Caco-2 (cell line): ENCODE measurements at regions of chr4 and their contacts with region 1.

Region 1: GRCh38 chr4:1856042-1856788 is at the start of gene LETM1:
- DNase-seq: peak; percentile 95 to 98
- H3K4me3 ChIP-seq: peak within 1 kb of the TSS; percentile 95
- H3K4me3 Mint-ChIP-seq: peak within 1 kb of the TSS; percentile 71
- H3K27ac Mint-ChIP-seq: peak within 1 kb of the TSS; percentile 64
- H3K4me1 ChIP-seq: peaks cover 14% of the 10 kb centered on the region
- H3K4me1 Mint-ChIP-seq: peaks cover 7% of the 10 kb centered on the region
- H3K27me3 ChIP-seq: no peaks in the 10 kb centered on the region
- H3K27me3 Mint-ChIP-seq: no peaks in the 10 kb centered on the region
- CTCF ChIP-seq: no peak
- total RNA-seq, gene LETM1: 63.9 and 68.9 TPM in 2 replicates

Region 2: DNA sequence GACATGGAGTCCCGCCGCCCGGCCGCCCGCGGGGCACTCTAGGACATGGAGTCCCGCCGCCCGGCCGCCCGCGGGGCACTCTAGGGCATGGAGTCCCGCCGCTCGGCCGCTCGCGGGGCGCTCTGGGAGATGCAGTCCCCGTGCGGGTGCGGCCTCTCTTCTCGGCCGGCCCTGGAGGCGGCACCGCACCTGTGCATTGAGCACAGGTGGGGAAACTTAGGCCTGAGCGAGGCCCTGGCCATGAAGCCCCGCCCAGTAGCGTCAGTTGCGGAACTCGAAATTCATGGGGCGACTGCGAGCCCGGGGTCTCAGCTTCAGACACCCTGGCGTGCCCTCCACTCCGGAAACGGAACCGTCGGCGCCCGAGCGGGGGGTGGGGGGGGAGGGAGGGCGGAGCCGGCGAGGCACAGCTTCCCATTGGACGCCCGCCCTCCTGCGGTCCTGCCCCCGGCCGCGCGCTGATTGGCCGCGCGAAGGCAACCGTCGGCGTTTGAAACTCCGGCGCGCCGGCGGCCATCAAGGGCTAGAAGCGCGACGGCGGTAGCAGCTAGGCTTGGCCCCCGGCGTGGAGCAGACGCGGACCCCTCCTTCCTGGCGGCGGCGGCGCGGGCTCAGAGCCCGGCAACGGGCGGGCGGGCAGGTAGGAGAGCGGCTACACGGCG is 135.1 kb before region 1 on chr4 and contains the starts of genes TACC3 and TMEM129:
- CTCF ChIA-PET with region 1: no interaction called
- POLR2A ChIA-PET with region 1: no interaction called
- intact Hi-C with region 1: loop called (anchors 1 kb)
- DNase-seq: peak; percentile 98
- H3K4me3 ChIP-seq: peak within 1 kb of the TSS; percentile 95
- H3K4me3 Mint-ChIP-seq: peak within 1 kb of the TSS; percentile 99
- H3K27ac Mint-ChIP-seq: peak within 1 kb of the TSS; percentile 94
- H3K4me1 ChIP-seq: peaks cover 6% of the 10 kb centered on the region; the same call in 1 of the 2 replicates
- H3K4me1 Mint-ChIP-seq: peaks cover 11% of the 10 kb centered on the region
- H3K27me3 ChIP-seq: no peaks in the 10 kb centered on the region
- H3K27me3 Mint-ChIP-seq: no peaks in the 10 kb centered on the region
- CTCF ChIP-seq: no peak
- total RNA-seq, gene TACC3: 104 and 106 TPM in 2 replicates
- total RNA-seq, gene TMEM129: 36.5 and 39.0 TPM in 2 replicates

Region 3: DNA sequence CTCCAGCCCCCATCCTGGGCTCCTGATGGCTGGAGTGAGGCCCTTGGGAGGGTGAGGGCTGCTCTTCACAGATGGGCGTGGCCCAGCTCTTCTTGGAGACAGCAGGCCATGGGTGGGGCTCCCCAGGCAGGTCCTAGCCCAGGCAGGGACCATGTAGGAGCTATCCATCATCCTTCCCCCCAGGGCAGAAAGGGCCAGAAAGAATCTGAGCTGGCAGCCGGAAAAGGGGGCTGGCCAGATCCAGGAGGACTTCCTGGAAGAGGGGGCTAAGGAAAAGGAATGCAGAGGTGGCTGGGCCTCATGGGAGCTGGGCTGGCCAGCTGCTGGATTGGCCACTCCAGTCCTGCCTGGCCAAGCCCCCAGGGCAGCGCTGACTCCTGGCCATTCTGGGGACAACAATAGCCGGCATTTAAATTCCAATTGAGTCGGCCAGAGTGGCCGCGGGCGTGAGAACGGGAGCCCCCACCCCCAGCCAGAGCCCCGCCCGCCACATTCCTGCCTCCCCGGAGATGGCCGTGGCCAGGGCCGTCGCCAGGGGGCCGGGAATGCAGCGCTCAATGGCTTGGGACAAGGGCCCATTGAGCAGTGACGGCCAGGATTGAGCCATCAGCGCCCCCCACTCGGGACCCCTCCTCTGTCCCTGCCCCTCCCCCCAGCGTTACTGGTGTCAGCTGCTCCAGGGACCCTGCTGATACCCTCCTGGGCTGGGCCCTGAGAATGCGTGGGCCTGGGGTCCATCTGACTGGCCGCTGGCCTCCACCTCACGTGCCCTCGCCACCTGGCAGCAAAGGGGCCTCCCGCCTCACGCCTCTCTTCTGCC is 78.2 kb before region 1 on chr4:
- CTCF ChIA-PET with region 1: no interaction called
- POLR2A ChIA-PET with region 1: no interaction called
- intact Hi-C with region 1: no loop called
- DNase-seq: peak; percentile 60 to 86
- H3K4me3 ChIP-seq: no peak overlapping the region
- H3K4me3 Mint-ChIP-seq: no peak overlapping the region
- H3K27ac Mint-ChIP-seq: no peak overlapping the region
- H3K4me1 ChIP-seq: peaks cover 28% of the 10 kb centered on the region
- H3K4me1 Mint-ChIP-seq: no peaks in the 10 kb centered on the region
- H3K27me3 ChIP-seq: no peaks in the 10 kb centered on the region
- H3K27me3 Mint-ChIP-seq: no peaks in the 10 kb centered on the region
- CTCF ChIP-seq: peak in 1 of 2 experiments; percentile 19

Region 4: DNA sequence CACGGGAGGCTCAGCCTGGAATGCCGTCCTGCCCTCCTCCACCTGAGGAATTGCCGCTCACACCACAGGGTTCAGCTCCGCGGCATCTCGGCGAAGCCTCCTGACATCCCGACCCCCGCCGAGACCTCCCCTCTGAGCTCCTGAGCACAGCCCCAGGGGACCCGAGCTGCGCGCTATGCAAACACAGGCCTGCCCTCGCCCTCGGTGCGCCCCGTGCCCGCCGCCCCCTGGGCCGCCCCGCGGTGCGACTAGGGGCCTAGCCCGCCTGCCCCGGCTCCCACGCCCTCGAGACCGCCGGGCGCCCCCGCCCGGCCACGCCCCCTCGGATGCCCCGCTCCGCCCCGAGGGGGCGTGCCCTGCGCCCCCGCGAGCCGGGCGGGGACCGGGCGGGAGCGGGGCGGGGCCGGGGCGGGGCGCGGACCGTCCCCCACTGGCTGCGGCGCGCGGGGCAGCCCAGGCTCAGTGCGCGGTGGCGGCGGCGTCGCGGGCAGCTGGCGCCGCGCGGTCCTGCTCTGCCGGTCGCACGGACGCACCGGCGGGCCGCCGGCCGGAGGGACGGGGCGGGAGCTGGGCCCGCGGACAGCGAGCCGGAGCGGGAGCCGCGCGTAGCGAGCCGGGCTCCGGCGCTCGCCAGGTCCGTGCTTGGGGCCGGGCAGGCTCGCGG is 63.3 kb before region 1 on chr4 and contains the start of gene FGFR3:
- CTCF ChIA-PET with region 1: no interaction called
- POLR2A ChIA-PET with region 1: no interaction called
- intact Hi-C with region 1: loop called (anchors 2 kb)
- DNase-seq: peak; percentile 80 to 83
- H3K4me3 ChIP-seq: peak within 1 kb of the TSS; percentile 73
- H3K4me3 Mint-ChIP-seq: peak within 1 kb of the TSS; percentile 68
- H3K27ac Mint-ChIP-seq: no peak within 1 kb of the TSS
- H3K4me1 ChIP-seq: peaks cover 34% of the 10 kb centered on the region
- H3K4me1 Mint-ChIP-seq: peaks cover 6% of the 10 kb centered on the region
- H3K27me3 ChIP-seq: no peaks in the 10 kb centered on the region
- H3K27me3 Mint-ChIP-seq: no peaks in the 10 kb centered on the region
- CTCF ChIP-seq: no peak
- total RNA-seq, gene FGFR3: 112 and 132 TPM in 2 replicates

Region 5: GRCh38 chr4:1870578-1871443 is 14.6 kb after region 1 on chr4 and contains the start of gene NSD2:
- CTCF ChIA-PET with region 1: interaction called, 6 read pairs
- POLR2A ChIA-PET with region 1: interaction called, 16 read pairs
- intact Hi-C with region 1: loop called (anchors 1 kb)
- DNase-seq: peak; percentile 87 to 95
- H3K4me3 ChIP-seq: peak within 1 kb of the TSS; percentile 69
- H3K4me3 Mint-ChIP-seq: peak within 1 kb of the TSS; percentile 93
- H3K27ac Mint-ChIP-seq: peak within 1 kb of the TSS; percentile 89
- H3K4me1 ChIP-seq: peaks cover 55% of the 10 kb centered on the region
- H3K4me1 Mint-ChIP-seq: peaks cover 21% of the 10 kb centered on the region
- H3K27me3 ChIP-seq: no peaks in the 10 kb centered on the region
- H3K27me3 Mint-ChIP-seq: no peaks in the 10 kb centered on the region
- CTCF ChIP-seq: no peak
- total RNA-seq, gene NSD2: 113 and 122 TPM in 2 replicates

Region 6: DNA sequence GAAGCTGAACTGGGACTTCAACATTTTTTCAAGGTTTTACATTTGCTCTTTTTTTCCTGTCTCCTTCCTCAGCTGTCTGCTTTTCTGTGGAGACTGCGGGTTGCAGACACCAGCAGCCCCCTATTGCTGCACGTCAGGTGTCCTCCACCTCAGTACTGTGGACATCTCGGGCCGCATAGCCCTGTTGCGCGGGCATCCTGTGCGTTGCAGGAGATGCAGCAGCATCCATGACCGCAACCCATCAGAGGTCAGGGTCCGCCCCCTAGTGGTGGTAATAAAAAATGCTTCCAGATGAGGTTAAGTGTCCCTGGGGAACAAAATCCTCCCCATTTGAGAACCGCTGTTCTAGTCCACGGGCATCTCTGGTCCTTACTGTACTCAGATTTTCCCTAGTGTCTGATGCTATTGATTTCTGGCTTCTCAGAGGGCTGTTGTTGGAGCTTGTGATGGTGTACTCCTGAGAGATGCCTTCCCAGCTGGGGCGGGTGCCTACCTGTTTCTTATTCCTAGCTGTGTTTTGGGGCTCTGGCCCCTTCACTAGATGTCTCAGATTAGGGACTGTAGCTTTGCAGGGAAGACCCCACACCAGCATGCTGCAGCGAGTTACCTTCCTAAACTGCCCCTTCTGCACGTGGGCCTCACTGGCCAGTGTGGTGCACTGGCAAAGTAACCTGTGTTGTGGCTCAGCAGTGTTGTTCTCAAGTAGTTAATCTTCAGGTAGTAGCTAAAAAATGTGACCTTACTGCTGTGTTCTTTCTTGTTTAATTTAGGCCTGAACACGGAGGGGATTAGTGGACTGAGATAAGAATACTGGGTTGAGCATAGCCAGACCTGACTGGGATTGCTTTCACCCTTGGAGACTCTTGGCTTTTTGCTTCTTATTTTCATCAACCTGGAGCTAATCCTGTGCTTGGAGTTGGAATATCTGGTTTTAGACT is 43.2 kb after region 1 on chr4:
- CTCF ChIA-PET with region 1: interaction called, 7 read pairs
- POLR2A ChIA-PET with region 1: no interaction called
- intact Hi-C with region 1: loop called (anchors 1 kb)
- DNase-seq: peak; percentile 74 to 82
- H3K4me3 ChIP-seq: no peak overlapping the region
- H3K4me3 Mint-ChIP-seq: no peak overlapping the region
- H3K27ac Mint-ChIP-seq: no peak overlapping the region
- H3K4me1 ChIP-seq: peaks cover 16% of the 10 kb centered on the region
- H3K4me1 Mint-ChIP-seq: peaks cover 8% of the 10 kb centered on the region
- H3K27me3 ChIP-seq: no peaks in the 10 kb centered on the region
- H3K27me3 Mint-ChIP-seq: no peaks in the 10 kb centered on the region
- CTCF ChIP-seq: peak; percentile 76 to 79

Region 7: GRCh38 chr4:1910643-1911042 is 54.4 kb after region 1 on chr4:
- CTCF ChIA-PET with region 1: interaction called, 10 read pairs
- POLR2A ChIA-PET with region 1: interaction called, 3 read pairs
- intact Hi-C with region 1: loop called (anchors 1 kb)
- DNase-seq: peak in 1 of 2 experiments; percentile 67
- H3K4me3 ChIP-seq: no peak overlapping the region
- H3K4me3 Mint-ChIP-seq: no peak overlapping the region
- H3K27ac Mint-ChIP-seq: no peak overlapping the region
- H3K4me1 ChIP-seq: no peaks in the 10 kb centered on the region
- H3K4me1 Mint-ChIP-seq: peaks cover 23% of the 10 kb centered on the region
- H3K27me3 ChIP-seq: no peaks in the 10 kb centered on the region
- H3K27me3 Mint-ChIP-seq: no peaks in the 10 kb centered on the region
- CTCF ChIP-seq: peak; percentile 51 to 63